ENCODE measurements at regions of chr5 and their contacts with region 1.

Region 1: GRCh38 chr5:154683101-154683880 is 71.9 kb upstream of the LARP1 start:
- DNase-seq: no peak
- H3K4me3 Mint-ChIP-seq: peak overlapping the region; percentile 59
- H3K27ac Mint-ChIP-seq: no peak overlapping the region
- H3K4me1 Mint-ChIP-seq: peaks cover 6% of the 10 kb centered on the region
- H3K27me3 Mint-ChIP-seq: peaks cover 2% of the 10 kb centered on the region

Region 2: DNA sequence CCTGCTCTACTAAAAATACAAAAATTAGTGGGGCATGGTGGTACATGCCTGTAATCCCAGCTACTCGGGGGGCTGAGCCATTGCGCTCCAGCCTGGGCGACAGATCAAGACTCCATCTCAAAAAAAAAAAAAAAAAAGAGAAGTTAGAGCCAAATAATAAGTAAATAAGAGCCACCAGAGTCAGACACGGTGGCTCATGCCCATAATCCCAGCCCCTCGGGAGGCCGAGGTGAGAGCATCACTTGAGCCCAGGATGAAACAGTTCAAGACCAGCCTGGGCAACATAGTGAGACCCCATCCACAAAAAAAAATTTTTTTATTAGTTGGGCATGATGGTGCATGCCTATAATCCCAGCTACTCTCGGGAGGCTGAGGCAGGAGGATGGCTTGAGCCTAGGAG is 13.9 kb before region 1 on chr5:
- CTCF ChIA-PET with region 1: no interaction called
- intact Hi-C with region 1: no loop called
- DNase-seq: no peak
- H3K4me3 Mint-ChIP-seq: no peak overlapping the region
- H3K27ac Mint-ChIP-seq: no peak overlapping the region
- H3K4me1 Mint-ChIP-seq: no peaks in the 10 kb centered on the region
- H3K27me3 Mint-ChIP-seq: no peaks in the 10 kb centered on the region

Region 3: DNA sequence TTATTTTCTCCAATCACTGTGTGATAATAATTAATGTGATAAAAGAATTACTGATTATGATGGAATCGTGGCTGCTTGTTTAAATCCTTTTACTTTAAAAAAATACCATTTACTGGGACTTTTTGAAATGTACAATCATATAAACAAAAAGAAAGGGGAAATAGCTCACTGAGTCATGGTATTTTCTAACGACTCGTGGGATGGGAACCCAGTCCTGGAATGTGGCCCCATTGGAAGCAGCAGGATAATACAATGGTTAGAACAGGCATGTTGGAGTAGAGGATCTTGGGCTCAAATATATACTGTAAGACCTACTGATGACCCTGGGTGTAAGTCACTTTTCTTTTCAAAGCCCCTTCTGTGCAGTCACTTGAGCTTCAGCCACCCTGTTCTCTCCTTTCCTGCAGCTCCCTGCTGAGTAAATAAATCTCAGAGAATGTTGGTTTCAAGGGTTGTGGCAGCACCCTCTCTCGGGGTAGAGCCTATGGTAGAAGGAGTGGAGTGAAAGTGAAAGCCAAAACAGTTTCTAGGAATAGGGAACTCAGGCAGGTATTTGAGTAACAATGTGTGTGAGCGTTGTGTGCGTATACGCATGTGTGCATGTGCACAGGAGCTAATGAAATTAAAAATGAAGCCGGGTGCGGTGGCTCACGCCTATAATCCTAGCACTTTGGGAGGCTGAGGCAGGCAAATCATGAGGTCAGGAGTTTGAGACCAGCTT is 31.1 kb after region 1 on chr5:
- CTCF ChIA-PET with region 1: no interaction called
- intact Hi-C with region 1: loop called (anchors 1 kb)
- DNase-seq: peak; percentile 27
- H3K4me3 Mint-ChIP-seq: no peak overlapping the region
- H3K27ac Mint-ChIP-seq: no peak overlapping the region
- H3K4me1 Mint-ChIP-seq: peaks cover 10% of the 10 kb centered on the region
- H3K27me3 Mint-ChIP-seq: no peaks in the 10 kb centered on the region

Region 4: GRCh38 chr5:154734370-154735248 is 51.3 kb after region 1 on chr5:
- CTCF ChIA-PET with region 1: no interaction called
- intact Hi-C with region 1: loop called (anchors 1 kb)
- DNase-seq: no peak
- H3K4me3 Mint-ChIP-seq: no peak overlapping the region
- H3K27ac Mint-ChIP-seq: no peak overlapping the region
- H3K4me1 Mint-ChIP-seq: no peaks in the 10 kb centered on the region
- H3K27me3 Mint-ChIP-seq: no peaks in the 10 kb centered on the region

Measured in activated naive CD4-positive, alpha-beta T cell treated with anti-CD3 and anti-CD28 coated beads for 36 hours (primary cell).